Transverse colon (tissue), 4 donors: ENCODE measurements at regions of chr12 and their contacts with region 1.

Region 1: GRCh38 chr12:46268590-46269558 is at the start of gene SLC38A1:
- DNase-seq: peak; percentile 91
- H3K4me3 ChIP-seq: peak within 1 kb of the TSS; percentile 59 to 75 (median 70)
- H3K27ac ChIP-seq: peak within 1 kb of the TSS; percentile 92 to 96 (median 93)
- H3K4me1 ChIP-seq: peaks cover 0 to 48% (median 17%) of the 10 kb centered on the region in 4 donors
- H3K27me3 ChIP-seq: no peaks in the 10 kb centered on the region
- CTCF ChIP-seq: no peak
- EP300 ChIP-seq: no peak
- POLR2A ChIP-seq: peak; percentile 95
- total RNA-seq, gene SLC38A1: 36.8 to 139 (median 117) TPM

Region 2: DNA sequence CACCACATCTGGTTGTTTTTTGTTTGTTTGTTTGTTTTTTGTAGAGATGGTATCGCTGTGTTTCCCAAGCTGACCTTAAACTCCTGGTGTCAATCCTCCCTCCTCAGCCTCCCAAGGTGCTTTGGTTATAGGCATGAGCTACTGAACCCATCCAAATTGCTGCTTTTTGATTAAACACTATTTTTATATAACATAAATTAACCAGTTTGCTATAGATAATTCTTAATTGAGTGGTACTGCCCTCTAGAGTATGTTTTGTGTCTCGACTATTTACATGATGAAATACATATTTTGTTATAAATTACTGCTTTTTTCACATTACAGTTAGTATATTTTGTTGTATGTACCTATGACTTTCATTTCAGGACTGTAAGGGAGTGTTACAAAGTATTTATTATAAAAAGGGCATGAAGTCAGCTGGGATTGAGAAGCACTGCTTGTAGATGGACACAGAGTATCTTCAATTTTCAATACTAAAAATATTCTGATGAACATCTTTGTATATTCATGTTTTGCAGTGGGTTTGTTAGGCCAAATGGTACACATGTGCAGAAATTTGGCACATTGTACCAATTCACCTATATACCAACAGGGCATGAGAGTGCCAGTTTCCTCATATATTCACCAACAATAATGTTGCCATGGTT is 263.6 kb before region 1 on chr12:
- in situ Hi-C with region 1: no loop called
- intact Hi-C with region 1: no loop called
- DNase-seq: no peak
- H3K4me3 ChIP-seq: no peak overlapping the region
- H3K27ac ChIP-seq: no peak overlapping the region
- H3K4me1 ChIP-seq: no peaks in the 10 kb centered on the region
- H3K27me3 ChIP-seq: no peaks in the 10 kb centered on the region
- CTCF ChIP-seq: peak in 4 of 5 experiments; percentile 30 to 41 (median 36)
- EP300 ChIP-seq: no peak
- POLR2A ChIP-seq: no peak

Region 3: GRCh38 chr12:46153268-46153872 is 115.5 kb before region 1 on chr12:
- in situ Hi-C with region 1: loop called in 1 of 4 experiments (anchors 25 kb)
- intact Hi-C with region 1: loop called (anchors 10 kb)
- DNase-seq: no peak
- H3K4me3 ChIP-seq: no peak overlapping the region
- H3K27ac ChIP-seq: no peak overlapping the region
- H3K4me1 ChIP-seq: peaks cover 5 to 58% (median 28%) of the 10 kb centered on the region in 4 donors
- H3K27me3 ChIP-seq: no peaks in the 10 kb centered on the region
- CTCF ChIP-seq: peak; percentile 49 to 66 (median 60)
- EP300 ChIP-seq: no peak
- POLR2A ChIP-seq: no peak

Region 4: GRCh38 chr12:46209914-46210872 is 58.7 kb before region 1 on chr12:
- in situ Hi-C with region 1: loop called in 1 of 4 experiments (anchors 10 kb)
- intact Hi-C with region 1: loop called (anchors 2 kb)
- DNase-seq: peak; percentile 59
- H3K4me3 ChIP-seq: no peak overlapping the region
- H3K27ac ChIP-seq: peak overlapping the region; percentile 43 to 68 (median 52)
- H3K4me1 ChIP-seq: peaks cover 8 to 36% (median 18%) of the 10 kb centered on the region in 4 donors
- H3K27me3 ChIP-seq: no peaks in the 10 kb centered on the region
- CTCF ChIP-seq: no peak
- EP300 ChIP-seq: no peak
- POLR2A ChIP-seq: no peak

Region 5: GRCh38 chr12:46382964-46383653 is 114.2 kb after region 1 on chr12:
- in situ Hi-C with region 1: no loop called
- intact Hi-C with region 1: loop called (anchors 10 kb)
- DNase-seq: peak; percentile 98
- H3K4me3 ChIP-seq: peak overlapping the region; percentile 65 to 86 (median 72)
- H3K27ac ChIP-seq: peak overlapping the region; percentile 98 to 100 (median 100)
- H3K4me1 ChIP-seq: peaks cover 7 to 49% (median 29%) of the 10 kb centered on the region in 4 donors
- H3K27me3 ChIP-seq: no peaks in the 10 kb centered on the region
- CTCF ChIP-seq: peak in 3 of 5 experiments; percentile 10 to 49 (median 24)
- EP300 ChIP-seq: no peak
- POLR2A ChIP-seq: peak; percentile 33